ENCODE measurements at regions of chr9 and their contacts with region 1.

Region 1: DNA sequence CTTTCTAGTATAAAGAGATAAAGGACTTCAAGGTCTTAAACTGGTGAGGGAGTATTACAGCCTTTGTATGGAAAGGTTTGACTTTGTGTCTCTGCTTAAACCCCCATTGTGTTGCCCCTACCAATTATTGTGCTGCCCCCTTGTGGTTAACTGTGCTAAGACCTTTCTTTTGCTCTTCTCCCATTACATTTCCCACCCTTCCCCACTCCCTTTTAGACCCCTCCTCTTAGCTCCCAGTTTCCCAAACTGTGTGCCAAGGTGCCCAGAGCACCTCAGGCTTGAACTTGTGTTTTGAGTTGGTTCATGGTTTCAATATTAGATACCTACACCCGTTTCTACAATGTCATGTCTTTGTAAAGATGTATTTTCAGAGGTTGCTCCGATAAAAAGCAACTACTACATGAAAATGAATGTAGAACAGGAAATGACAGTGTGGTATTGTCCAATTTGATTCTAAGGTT is 2.9 kb downstream of the JAK2 start:
- DNase-seq: peak in 33 of 35 experiments; percentile 6 to 80 (median 25)
- ATAC-seq: no peak
- H3K4me3 ChIP-seq: no peak overlapping the region
- H3K4me3 Mint-ChIP-seq: no peak overlapping the region
- H3K27ac ChIP-seq: no peak overlapping the region
- H3K27ac Mint-ChIP-seq: no peak overlapping the region
- H3K4me1 ChIP-seq: peaks cover 17 to 25% of the 10 kb centered on the region in 2 experiments
- H3K4me1 Mint-ChIP-seq: peaks cover 36 to 42% (median 37%) of the 10 kb centered on the region in 3 donors
- H3K27me3 ChIP-seq: no peaks in the 10 kb centered on the region
- H3K27me3 Mint-ChIP-seq: no peaks in the 10 kb centered on the region

Region 2: DNA sequence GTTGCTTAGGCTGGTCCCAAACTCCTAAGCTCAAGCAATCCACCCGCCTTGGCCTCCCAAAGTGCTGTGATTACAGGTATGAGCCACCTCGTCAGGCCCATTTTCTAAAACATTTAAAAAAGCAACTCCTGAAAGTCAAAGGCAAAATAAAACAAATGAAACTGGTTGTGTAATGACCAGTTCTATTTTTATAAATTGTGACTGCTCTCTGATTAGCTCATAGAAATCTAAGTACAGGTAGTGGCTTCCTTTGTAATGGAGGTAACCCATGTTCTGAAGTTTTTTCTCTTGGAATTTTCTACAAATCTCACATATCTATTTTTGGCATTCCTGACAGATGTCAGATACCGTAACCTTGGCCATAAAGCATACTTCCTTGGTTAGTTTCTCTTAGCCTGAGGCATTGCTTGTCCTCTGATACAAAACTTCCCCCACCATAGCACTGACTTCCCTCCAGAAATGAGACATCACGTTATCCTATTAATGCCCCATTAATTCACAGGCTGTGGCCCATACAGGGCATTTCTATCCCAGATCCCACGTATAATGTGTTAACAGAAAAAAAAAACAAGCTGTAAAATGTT is 232.9 kb before region 1 on chr9:
- CTCF ChIA-PET with region 1: interaction called, 13 to 30 read pairs
- POLR2A ChIA-PET with region 1: no interaction called
- DNase-seq: no peak
- ATAC-seq: no peak
- H3K4me3 ChIP-seq: no peak overlapping the region
- H3K4me3 Mint-ChIP-seq: no peak overlapping the region
- H3K27ac ChIP-seq: no peak overlapping the region
- H3K27ac Mint-ChIP-seq: no peak overlapping the region
- H3K4me1 ChIP-seq: peaks cover 0 to 4% of the 10 kb centered on the region in 2 experiments
- H3K4me1 Mint-ChIP-seq: peaks cover 2 to 7% (median 3%) of the 10 kb centered on the region in 3 donors
- H3K27me3 ChIP-seq: peaks cover 0 to 6% of the 10 kb centered on the region in 2 experiments
- H3K27me3 Mint-ChIP-seq: no peaks in the 10 kb centered on the region

Region 3: GRCh38 chr9:4828761-4829160 is 159.2 kb before region 1 on chr9:
- CTCF ChIA-PET with region 1: interaction called in 1 of 2 experiments, 3 read pairs
- POLR2A ChIA-PET with region 1: interaction called in 1 of 2 experiments, 10 read pairs
- DNase-seq: no peak
- ATAC-seq: no peak
- H3K4me3 ChIP-seq: no peak overlapping the region
- H3K4me3 Mint-ChIP-seq: no peak overlapping the region
- H3K27ac ChIP-seq: no peak overlapping the region
- H3K27ac Mint-ChIP-seq: no peak overlapping the region
- H3K4me1 ChIP-seq: no peaks in the 10 kb centered on the region
- H3K4me1 Mint-ChIP-seq: peaks cover 0 to 10% (median 4%) of the 10 kb centered on the region in 3 donors
- H3K27me3 ChIP-seq: no peaks in the 10 kb centered on the region
- H3K27me3 Mint-ChIP-seq: no peaks in the 10 kb centered on the region